ENCODE measurements at regions of chr12 and their contacts with region 1.

Region 1: GRCh38 chr12:95998611-95999286 is 2.6 kb upstream of the HAL start:
- DNase-seq: peak; percentile 78
- H3K4me3 ChIP-seq: no peak overlapping the region
- H3K27ac ChIP-seq: no peak overlapping the region
- H3K4me1 ChIP-seq: peaks cover 7% of the 10 kb centered on the region
- CTCF ChIP-seq: peak; percentile 88

Region 2: GRCh38 chr12:95623585-95624042 is 375.1 kb before region 1 on chr12:
- CTCF ChIA-PET with region 1: no interaction called
- POLR2A ChIA-PET with region 1: no interaction called
- intact Hi-C with region 1: loop called (anchors 10 kb)
- DNase-seq: peak; percentile 51
- H3K4me3 ChIP-seq: no peak overlapping the region
- H3K27ac ChIP-seq: no peak overlapping the region
- H3K4me1 ChIP-seq: no peaks in the 10 kb centered on the region
- CTCF ChIP-seq: peak; percentile 87

Region 3: DNA sequence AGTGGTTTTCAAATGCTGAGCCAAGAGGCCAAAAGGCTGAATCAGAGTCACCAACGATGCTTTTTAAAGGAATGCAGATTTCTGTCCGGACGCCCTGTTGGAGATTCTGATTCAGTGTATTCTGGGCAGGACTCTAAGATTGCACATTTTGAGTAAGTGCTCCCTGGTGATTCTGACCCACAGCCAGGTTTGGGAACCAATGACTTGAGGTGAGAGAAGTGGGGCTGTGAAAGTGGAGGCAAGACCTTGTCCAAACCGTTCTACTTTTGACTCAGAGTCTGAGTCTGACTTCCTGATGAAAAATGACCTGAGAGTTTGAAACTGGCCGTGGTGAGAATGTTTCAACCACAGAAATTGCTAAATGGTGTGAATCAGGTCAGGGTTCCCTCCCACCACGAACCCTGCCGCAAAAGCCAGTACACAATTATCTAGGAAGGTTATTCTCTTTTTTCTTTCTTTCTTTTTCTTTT is 298.4 kb before region 1 on chr12:
- CTCF ChIA-PET with region 1: no interaction called
- POLR2A ChIA-PET with region 1: no interaction called
- intact Hi-C with region 1: loop called (anchors 10 kb)
- DNase-seq: no peak
- H3K4me3 ChIP-seq: no peak overlapping the region
- H3K27ac ChIP-seq: no peak overlapping the region
- H3K4me1 ChIP-seq: no peaks in the 10 kb centered on the region
- CTCF ChIP-seq: no peak

Region 4: GRCh38 chr12:95774311-95775045 is 224.3 kb before region 1 on chr12:
- CTCF ChIA-PET with region 1: no interaction called
- POLR2A ChIA-PET with region 1: no interaction called
- intact Hi-C with region 1: no loop called
- DNase-seq: no peak
- H3K4me3 ChIP-seq: no peak overlapping the region
- H3K27ac ChIP-seq: no peak overlapping the region
- H3K4me1 ChIP-seq: no peaks in the 10 kb centered on the region
- CTCF ChIP-seq: no peak

Region 5: GRCh38 chr12:95918194-95918993 is 80.4 kb before region 1 on chr12:
- CTCF ChIA-PET with region 1: interaction called, 8 read pairs
- POLR2A ChIA-PET with region 1: no interaction called
- intact Hi-C with region 1: loop called (anchors 1 kb)
- DNase-seq: peak; percentile 75
- H3K4me3 ChIP-seq: no peak overlapping the region
- H3K27ac ChIP-seq: no peak overlapping the region
- H3K4me1 ChIP-seq: peaks cover 4% of the 10 kb centered on the region
- CTCF ChIP-seq: peak; percentile 93

Region 6: DNA sequence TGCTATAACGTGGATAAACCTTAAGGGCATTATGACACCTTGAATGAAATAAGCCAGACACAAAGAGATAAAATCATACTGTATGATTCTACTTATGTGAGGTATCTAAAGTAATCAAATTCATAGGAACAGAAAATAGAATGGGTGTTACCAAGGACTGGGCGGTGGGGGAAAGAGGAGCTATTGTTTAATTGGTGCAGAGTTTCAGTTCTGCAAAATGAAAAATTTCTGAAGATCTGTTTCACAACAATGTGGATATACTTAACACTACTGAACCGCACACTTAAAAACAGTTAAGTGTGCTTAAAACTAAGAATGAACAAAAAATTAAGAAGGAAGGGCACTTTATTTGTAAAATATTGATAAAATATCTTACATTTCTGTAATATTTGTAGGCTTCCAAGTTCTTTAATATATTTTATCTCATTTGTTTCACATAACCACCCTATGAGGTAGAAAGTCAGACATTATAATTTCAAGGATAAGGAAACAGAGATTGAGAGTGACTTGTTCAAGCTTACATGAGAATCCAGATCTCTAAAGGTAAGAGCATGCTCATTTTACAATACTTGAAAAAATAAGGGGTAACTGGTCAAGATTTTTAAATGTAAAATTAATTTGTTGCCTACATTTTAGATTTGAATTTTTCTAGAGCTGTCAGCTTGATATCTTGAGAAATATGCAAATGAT is 21.7 kb after region 1 on chr12:
- CTCF ChIA-PET with region 1: interaction called, 4 read pairs
- POLR2A ChIA-PET with region 1: interaction called, 10 read pairs
- intact Hi-C with region 1: no loop called
- DNase-seq: peak; percentile 82
- H3K4me3 ChIP-seq: peak overlapping the region; percentile 49
- H3K27ac ChIP-seq: peak overlapping the region; percentile 93
- H3K4me1 ChIP-seq: peaks cover 32% of the 10 kb centered on the region
- CTCF ChIP-seq: no peak

Measured in OCI-LY7 (cell line).